Spleen (tissue), 13 donors: ENCODE measurements at regions of chr2 and their contacts with region 1.

Region 1: GRCh38 chr2:69816923-69817542 is 12.4 kb upstream of the GMCL1 start:
- DNase-seq: no peak
- H3K4me3 ChIP-seq: no peak overlapping the region
- H3K27ac ChIP-seq: peak overlapping the region in 1 of 8 donors; percentile 24
- H3K4me1 ChIP-seq: peaks cover 5 to 30% (median 20%) of the 10 kb centered on the region in 6 donors
- H3K27me3 ChIP-seq: no peaks in the 10 kb centered on the region
- CTCF ChIP-seq: peak; percentile 83 to 98 (median 94)
- POLR2A ChIP-seq: no peak

Region 2: GRCh38 chr2:69559442-69560146 is 257.4 kb before region 1 on chr2:
- intact Hi-C with region 1: loop called (anchors 10 kb)
- DNase-seq: no peak
- H3K4me3 ChIP-seq: no peak overlapping the region
- H3K27ac ChIP-seq: no peak overlapping the region
- H3K4me1 ChIP-seq: peaks cover 3 to 83% (median 19%) of the 10 kb centered on the region in 6 donors
- H3K27me3 ChIP-seq: no peaks in the 10 kb centered on the region
- CTCF ChIP-seq: peak; percentile 22 to 71 (median 62)
- POLR2A ChIP-seq: no peak

Region 3: GRCh38 chr2:69724540-69725159 is 92.4 kb before region 1 on chr2:
- intact Hi-C with region 1: loop called (anchors 5 kb)
- DNase-seq: peak; percentile 92
- H3K4me3 ChIP-seq: peak overlapping the region in 5 of 8 donors; percentile 14 to 59 (median 24)
- H3K27ac ChIP-seq: no peak overlapping the region
- H3K4me1 ChIP-seq: peaks cover 0 to 12% (median 6%) of the 10 kb centered on the region in 6 donors
- H3K27me3 ChIP-seq: no peaks in the 10 kb centered on the region
- CTCF ChIP-seq: peak; percentile 90 to 97 (median 96)
- POLR2A ChIP-seq: no peak

Region 4: GRCh38 chr2:69973335-69973735 is 156.3 kb after region 1 on chr2:
- intact Hi-C with region 1: no loop called
- DNase-seq: peak; percentile 7
- H3K4me3 ChIP-seq: no peak overlapping the region
- H3K27ac ChIP-seq: no peak overlapping the region
- H3K4me1 ChIP-seq: peaks cover 0 to 20% (median 0%) of the 10 kb centered on the region in 6 donors
- H3K27me3 ChIP-seq: no peaks in the 10 kb centered on the region
- CTCF ChIP-seq: no peak
- POLR2A ChIP-seq: no peak